ENCODE measurements at regions of chr11 and their contacts with region 1.

Region 1: GRCh38 chr11:66311965-66312548 is 4.8 kb downstream of the CD248 start:
- DNase-seq: no peak
- H3K4me3 ChIP-seq: peak overlapping the region; percentile 35
- H3K27me3 ChIP-seq: peaks cover 3% of the 10 kb centered on the region; the same call in 1 of the 2 replicates
- CTCF ChIP-seq: no peak; the same call in 1 of the 2 replicates

Region 2: GRCh38 chr11:66228521-66228920 is 83.5 kb before region 1 on chr11:
- CTCF ChIA-PET with region 1: no interaction called
- POLR2A ChIA-PET with region 1: no interaction called
- DNase-seq: no peak
- H3K4me3 ChIP-seq: no peak overlapping the region
- H3K27me3 ChIP-seq: no peaks in the 10 kb centered on the region
- CTCF ChIP-seq: no peak

Region 3: DNA sequence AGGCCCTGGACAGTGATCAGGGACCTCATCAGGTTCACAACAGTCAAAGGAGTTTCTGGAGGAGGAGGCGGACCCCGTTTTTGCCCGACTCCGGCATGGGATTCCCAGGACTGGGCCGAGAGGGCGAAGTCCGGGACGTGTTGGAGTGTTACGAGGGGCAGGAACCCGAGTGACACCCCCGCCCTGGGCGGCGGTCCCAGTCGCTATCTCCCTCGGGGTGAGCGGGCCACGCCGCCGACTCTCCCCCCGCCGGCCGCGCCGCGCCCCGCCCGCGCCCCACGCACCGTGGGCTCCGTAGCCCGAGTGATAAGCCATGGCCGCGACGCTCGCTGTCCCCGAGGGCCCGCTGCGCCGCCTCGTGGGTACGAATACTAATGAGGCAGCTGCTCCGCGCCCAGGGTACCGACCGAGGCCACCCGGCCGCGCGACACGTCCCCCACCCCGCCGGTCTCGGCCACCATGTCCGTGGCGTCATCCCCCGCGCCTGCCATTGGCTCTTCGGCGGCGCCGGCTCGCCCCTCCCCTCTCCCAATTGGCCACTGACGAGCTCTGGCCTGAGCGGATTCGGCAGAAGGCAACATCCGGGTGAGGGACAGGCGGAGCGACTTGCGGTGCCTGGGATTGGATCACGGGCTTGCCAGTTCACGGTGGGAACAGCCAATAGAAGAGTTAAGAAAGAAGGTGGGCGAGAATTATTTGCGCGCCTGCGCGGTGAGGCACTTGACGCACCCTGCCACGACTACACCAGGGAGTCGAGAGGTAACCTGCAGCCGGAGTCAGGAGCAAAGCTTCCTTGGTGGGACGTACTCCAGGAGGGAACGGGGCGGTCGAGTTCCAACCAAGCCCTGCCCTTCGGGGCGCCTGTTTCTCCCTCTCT is 23.1 kb before region 1 on chr11 and contains the start of gene YIF1A:
- CTCF ChIA-PET with region 1: interaction called, 34 read pairs
- POLR2A ChIA-PET with region 1: interaction called, 18 read pairs
- DNase-seq: peak; percentile 98
- H3K4me3 ChIP-seq: peak within 1 kb of the TSS; percentile 84
- H3K27me3 ChIP-seq: peaks cover 19% of the 10 kb centered on the region
- CTCF ChIP-seq: no peak
- polyA plus RNA-seq, gene YIF1A: 151 and 228 TPM in 2 replicates

Region 4: DNA sequence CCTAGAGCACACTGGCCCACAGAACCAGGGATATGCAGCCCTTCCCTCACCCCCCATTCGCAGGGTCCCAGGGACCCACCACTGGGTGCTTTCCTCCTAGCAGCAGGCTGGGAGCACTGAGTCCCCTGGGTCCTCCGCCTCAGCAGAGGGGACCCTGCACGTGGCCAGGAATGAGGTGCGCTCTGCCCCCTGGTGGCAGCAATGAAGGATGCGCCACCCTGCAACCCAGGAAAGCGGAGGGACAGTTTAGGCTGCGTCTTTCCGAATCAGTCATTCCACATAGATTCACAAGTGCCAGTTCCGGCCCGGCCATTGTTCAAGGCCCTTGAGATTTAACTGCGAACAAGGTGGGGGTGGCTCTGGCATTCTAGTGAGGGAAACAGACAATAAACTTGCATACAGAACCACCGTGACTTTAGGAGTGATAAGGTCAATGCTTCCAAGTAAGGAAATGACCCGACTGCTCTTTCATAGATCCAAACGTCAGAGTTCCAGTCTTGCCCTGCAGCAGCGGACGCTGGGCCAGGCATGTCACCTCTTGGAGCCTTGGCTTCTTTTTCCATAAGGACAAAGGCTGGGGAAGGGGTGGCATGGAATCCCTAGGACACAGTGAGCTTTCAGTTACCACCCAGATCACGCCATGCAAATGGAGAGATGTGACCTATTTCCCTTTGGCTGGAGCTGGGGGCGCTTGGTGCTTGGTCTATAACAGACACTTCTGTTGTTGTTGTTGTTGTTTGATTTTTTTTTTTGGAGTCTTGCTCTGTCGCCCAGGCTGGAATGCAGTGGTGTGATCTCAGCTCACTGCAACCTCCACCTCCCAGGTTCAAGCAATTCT is 16.5 kb after region 1 on chr11:
- CTCF ChIA-PET with region 1: interaction called, 201 read pairs
- POLR2A ChIA-PET with region 1: interaction called, 17 read pairs
- DNase-seq: no peak
- H3K4me3 ChIP-seq: no peak overlapping the region
- H3K27me3 ChIP-seq: no peaks in the 10 kb centered on the region
- CTCF ChIP-seq: peak; percentile 94

Region 5: DNA sequence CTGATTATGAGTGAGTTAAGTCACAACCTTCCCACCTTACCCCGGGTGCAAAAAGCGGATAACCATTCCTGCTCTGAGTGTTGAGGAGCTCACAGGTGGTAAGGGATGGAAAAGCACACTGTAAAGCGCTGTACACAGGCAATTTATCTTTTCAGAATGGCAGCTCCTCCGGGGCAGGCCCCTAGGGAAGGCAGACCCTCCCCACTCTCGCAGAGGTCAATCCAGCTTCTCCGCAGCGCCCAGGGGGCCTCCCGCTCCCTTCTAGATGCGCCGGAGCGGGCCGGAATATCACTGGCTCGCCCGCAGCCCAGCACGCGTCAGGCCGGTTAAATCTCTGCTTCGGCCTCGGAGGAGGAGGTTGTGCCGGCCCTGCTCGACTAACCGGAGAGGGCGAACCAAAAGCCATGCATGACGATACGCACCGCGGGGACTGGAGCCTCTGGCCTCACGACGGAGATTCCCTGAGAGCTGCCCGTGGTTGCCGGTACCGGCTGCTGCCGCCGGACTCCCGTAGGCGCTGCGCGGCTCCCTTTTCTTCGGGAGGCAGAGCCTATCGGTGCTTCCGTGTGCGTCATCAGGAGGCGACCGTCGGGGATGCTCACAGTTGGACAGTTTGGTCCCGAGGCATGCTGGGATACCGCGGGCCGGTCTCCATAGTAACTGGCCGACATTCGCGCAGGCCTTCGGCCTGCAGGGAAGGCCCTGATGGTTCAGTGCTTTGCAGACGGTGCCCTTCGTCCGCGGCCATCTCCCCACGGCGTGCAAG is 32.7 kb after region 1 on chr11 and contains the start of gene BRMS1:
- CTCF ChIA-PET with region 1: interaction called, 81 read pairs
- POLR2A ChIA-PET with region 1: interaction called, 3 read pairs
- DNase-seq: peak; percentile 80
- H3K4me3 ChIP-seq: peak within 1 kb of the TSS; percentile 98
- H3K27me3 ChIP-seq: no peaks in the 10 kb centered on the region
- CTCF ChIP-seq: peak; percentile 33; the same call in 1 of the 2 replicates
- polyA plus RNA-seq, gene BRMS1: 36.7 and 46.3 TPM in 2 replicates

Region 6: DNA sequence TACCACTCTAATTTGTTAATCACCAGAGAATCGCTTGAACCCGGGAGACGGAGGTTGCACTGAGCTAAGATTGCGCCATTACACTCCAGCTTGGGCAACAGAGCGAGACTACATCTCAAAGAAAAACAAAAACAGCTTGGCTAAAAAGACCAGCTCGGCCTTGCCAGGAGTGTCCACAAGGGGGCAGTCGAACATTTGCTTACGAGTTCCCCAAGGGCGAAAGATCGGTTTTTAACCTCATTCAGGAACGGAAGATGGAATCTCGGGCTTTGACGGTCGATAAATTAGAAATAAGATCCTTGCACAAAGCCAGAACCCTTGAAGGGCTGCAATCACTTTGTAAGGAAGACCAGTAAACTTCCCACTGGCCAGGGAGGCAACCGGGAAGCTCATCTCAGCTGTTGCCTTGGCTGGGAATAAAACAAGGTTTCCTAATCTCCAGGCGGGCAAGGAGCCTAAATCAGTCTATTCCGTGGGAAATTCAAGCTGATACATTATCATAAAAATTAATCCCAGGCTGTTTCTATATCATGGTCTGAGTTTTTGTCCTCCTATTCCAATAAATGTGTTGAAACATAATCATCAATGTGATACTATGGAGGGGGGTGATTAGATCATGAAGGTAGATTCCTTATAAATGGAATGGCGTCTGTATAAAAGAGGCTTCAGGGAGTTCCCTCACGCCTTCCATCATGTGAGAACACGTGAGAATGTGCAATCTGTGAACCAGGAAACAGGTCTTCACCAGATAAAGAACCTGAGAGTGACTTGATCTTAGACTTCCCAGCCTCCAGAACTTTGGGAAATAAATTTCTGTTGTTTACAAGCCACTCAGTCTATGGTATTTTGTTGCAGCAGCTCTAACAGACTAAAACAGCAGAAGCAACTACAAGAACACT is 74.4 kb after region 1 on chr11:
- CTCF ChIA-PET with region 1: interaction called, 188 read pairs
- POLR2A ChIA-PET with region 1: interaction called, 4 read pairs
- DNase-seq: peak; percentile 44
- H3K4me3 ChIP-seq: 0 out of 2 replicates have a peak overlapping the region, but pooled peaks have one; percentile 5
- H3K27me3 ChIP-seq: no peaks in the 10 kb centered on the region
- CTCF ChIP-seq: peak; percentile 98

Region 7: DNA sequence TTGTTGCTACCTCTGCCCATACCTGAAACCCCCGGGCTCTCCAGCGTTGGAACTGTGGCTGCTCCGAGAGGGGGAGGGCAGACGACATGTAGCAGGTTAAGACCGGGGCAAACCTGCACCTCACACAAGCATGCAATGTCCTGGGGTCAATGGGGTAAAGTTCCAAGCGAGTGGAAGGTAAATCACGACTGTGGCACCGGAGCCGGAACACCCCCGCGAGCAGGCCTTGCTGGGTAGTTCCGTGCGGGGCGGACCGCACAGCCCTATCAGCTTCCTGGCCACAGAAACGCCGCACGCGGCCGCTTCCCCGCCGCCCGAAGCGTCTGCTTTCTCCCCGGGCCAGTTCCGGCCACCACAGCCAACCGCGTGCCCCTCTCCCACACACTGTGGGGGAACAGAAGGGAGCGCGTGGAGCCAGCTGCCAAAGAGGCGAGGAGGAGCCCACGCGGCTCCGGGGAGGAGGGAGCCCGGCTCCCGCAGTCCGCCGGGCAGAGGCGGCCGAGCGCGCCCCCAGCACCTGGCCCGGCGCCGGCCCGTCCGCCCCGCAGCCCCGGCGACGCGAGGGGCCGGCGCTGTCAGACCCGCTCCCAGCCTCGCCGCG is 415.3 kb after region 1 on chr11:
- CTCF ChIA-PET with region 1: no interaction called
- POLR2A ChIA-PET with region 1: no interaction called
- DNase-seq: no peak
- H3K4me3 ChIP-seq: peak overlapping the region; percentile 29
- H3K27me3 ChIP-seq: peaks cover 37% of the 10 kb centered on the region
- CTCF ChIP-seq: no peak